ENCODE measurements at regions of chr5 and their contacts with region 1.

Region 1: GRCh38 chr5:9534881-9535517 is 10.9 kb downstream of the SEMA5A start:
- DNase-seq: peak; percentile 41
- ATAC-seq: peak; percentile 53 to 84

Region 2: GRCh38 chr5:8943301-8943700 is 591.7 kb before region 1 on chr5:
- intact Hi-C with region 1: no loop called
- DNase-seq: no peak
- ATAC-seq: no peak

Region 3: GRCh38 chr5:9284781-9285307 is 250.2 kb before region 1 on chr5:
- intact Hi-C with region 1: loop called in 1 of 2 experiments (anchors 10 kb)
- DNase-seq: peak; percentile 24
- ATAC-seq: peak; percentile 93 to 94

Region 4: DNA sequence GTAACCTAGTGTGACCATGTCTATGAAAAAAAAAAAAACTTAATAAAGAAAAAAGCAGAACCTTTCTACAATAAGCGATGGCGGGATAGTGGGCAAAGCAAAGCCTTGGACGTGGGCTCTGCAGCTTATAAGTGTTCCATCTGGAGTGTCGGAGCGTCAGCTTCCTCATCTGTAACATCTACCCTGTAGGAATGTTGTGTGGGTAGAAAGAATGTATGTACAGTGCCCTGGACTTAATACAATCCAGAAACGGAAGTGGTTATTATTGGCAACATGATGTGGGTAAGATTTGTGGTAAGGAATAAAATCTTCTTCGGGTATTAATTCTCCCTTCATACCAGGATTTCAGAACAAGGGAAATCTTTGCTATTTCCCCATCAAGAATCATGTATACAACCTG is 55.6 kb before region 1 on chr5:
- intact Hi-C with region 1: no loop called
- DNase-seq: no peak
- ATAC-seq: no peak

Region 5: GRCh38 chr5:9888501-9888901 is 353.5 kb after region 1 on chr5:
- intact Hi-C with region 1: no loop called
- DNase-seq: no peak
- ATAC-seq: peak; percentile 44 to 75

Measured in left cardiac atrium (tissue), 4 donors.